Activated B cell treated with CpG ODN at 0.5 μM for 24 hours (primary cell): ENCODE measurements at regions of chr4 and their contacts with region 1.

Region 1: GRCh38 chr4:35365186-35365585 is 879.1 kb downstream of the ARAP2 start:
- DNase-seq: no peak
- ATAC-seq: no peak
- H3K4me3 Mint-ChIP-seq: no peak overlapping the region
- H3K27ac Mint-ChIP-seq: no peak overlapping the region
- H3K4me1 Mint-ChIP-seq: no peaks in the 10 kb centered on the region
- H3K27me3 Mint-ChIP-seq: no peaks in the 10 kb centered on the region
- CTCF ChIP-seq: no peak

Region 2: DNA sequence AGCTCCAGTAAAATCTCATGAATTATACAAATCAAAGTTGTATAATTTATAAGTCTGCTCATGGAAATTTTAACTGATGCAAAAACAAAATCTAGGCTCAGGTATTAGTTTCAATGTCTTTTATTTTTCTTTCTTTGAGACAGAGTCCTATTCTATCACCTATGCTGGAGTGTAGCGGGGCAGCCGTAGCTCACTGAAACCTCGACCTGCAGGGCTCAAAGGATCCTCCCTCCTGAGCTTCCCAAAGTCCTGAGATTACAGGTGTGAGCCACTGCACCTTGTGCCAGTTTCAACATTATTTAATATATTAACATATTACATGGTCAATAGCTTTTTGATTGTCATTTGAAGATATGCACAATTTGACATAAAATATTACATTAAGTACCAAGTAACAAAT is 200.5 kb after region 1 on chr4:
- CTCF ChIA-PET with region 1: no interaction called
- POLR2A ChIA-PET with region 1: no interaction called
- intact Hi-C with region 1: loop called (anchors 10 kb)
- DNase-seq: no peak
- ATAC-seq: no peak
- H3K4me3 Mint-ChIP-seq: no peak overlapping the region
- H3K27ac Mint-ChIP-seq: no peak overlapping the region
- H3K4me1 Mint-ChIP-seq: no peaks in the 10 kb centered on the region
- H3K27me3 Mint-ChIP-seq: no peaks in the 10 kb centered on the region
- CTCF ChIP-seq: no peak